ENCODE measurements at regions of chr2 and their contacts with region 1.

Region 1: DNA sequence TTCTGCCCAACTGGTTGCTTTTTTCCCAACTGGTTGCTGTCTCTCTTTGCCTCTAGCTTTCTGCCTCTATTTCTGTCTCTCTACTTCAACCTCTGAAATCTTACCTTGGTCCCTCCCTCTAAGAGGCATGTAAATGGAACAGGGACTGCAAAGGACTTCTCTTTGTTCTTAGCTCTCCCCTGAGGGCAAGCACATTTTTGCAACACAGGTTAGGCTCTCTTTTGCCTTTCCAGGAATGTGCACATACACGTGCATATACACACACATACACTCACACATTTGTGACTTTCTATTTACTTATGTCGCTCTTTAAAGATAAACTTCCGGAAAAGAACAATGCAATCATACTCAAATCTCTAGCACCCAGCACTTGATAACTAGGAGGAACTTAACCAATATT is 262.6 kb upstream of the DDX18 start:
- DNase-seq: no peak
- ATAC-seq: no peak
- H3K4me3 ChIP-seq: no peak overlapping the region
- H3K27ac ChIP-seq: no peak overlapping the region
- H3K4me1 ChIP-seq: no peaks in the 10 kb centered on the region
- H3K27me3 ChIP-seq: no peaks in the 10 kb centered on the region
- CTCF ChIP-seq: no peak
- POLR2A ChIP-seq: no peak
- RAD21 ChIP-seq: no peak

Region 2: GRCh38 chr2:116133381-116133942 is 1418.4 kb before region 1 on chr2:
- CTCF ChIA-PET with region 1: no interaction called
- POLR2A ChIA-PET with region 1: no interaction called
- RAD21 ChIA-PET with region 1: no interaction called
- intact Hi-C with region 1: loop called (anchors 5 kb)
- DNase-seq: no peak
- ATAC-seq: no peak
- H3K4me3 ChIP-seq: no peak overlapping the region
- H3K27ac ChIP-seq: no peak overlapping the region
- H3K4me1 ChIP-seq: no peaks in the 10 kb centered on the region
- H3K27me3 ChIP-seq: no peaks in the 10 kb centered on the region
- CTCF ChIP-seq: no peak
- POLR2A ChIP-seq: no peak
- RAD21 ChIP-seq: no peak

Region 3: DNA sequence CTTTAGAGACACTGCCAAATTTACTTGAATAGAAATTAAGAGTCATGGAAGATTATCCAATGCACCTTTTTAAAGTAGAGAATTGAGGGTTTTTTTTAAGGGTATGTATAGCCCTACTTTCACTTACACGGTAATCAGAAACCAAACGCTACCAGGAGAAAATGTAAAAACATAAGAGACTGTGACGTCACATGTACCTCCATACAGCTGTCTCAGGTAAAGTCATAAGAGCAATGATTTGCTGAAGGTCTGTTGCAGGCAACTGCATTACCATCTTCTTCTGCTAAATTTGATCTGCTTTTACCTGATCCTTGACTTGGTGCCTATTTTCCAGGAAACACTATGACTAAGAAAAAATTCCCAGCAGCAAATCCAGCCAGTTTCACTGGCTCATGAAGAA is 215.9 kb before region 1 on chr2:
- CTCF ChIA-PET with region 1: no interaction called
- POLR2A ChIA-PET with region 1: no interaction called
- RAD21 ChIA-PET with region 1: no interaction called
- intact Hi-C with region 1: no loop called
- DNase-seq: no peak
- ATAC-seq: no peak
- H3K4me3 ChIP-seq: no peak overlapping the region
- H3K27ac ChIP-seq: no peak overlapping the region
- H3K4me1 ChIP-seq: no peaks in the 10 kb centered on the region
- H3K27me3 ChIP-seq: no peaks in the 10 kb centered on the region
- CTCF ChIP-seq: no peak
- POLR2A ChIP-seq: no peak
- RAD21 ChIP-seq: no peak

Region 4: GRCh38 chr2:117631152-117631945 is 79.5 kb after region 1 on chr2:
- CTCF ChIA-PET with region 1: no interaction called
- POLR2A ChIA-PET with region 1: no interaction called
- RAD21 ChIA-PET with region 1: no interaction called
- intact Hi-C with region 1: no loop called
- DNase-seq: no peak
- ATAC-seq: no peak
- H3K4me3 ChIP-seq: no peak overlapping the region
- H3K27ac ChIP-seq: no peak overlapping the region
- H3K4me1 ChIP-seq: no peaks in the 10 kb centered on the region
- H3K27me3 ChIP-seq: no peaks in the 10 kb centered on the region
- CTCF ChIP-seq: no peak
- POLR2A ChIP-seq: no peak
- RAD21 ChIP-seq: no peak

Region 5: DNA sequence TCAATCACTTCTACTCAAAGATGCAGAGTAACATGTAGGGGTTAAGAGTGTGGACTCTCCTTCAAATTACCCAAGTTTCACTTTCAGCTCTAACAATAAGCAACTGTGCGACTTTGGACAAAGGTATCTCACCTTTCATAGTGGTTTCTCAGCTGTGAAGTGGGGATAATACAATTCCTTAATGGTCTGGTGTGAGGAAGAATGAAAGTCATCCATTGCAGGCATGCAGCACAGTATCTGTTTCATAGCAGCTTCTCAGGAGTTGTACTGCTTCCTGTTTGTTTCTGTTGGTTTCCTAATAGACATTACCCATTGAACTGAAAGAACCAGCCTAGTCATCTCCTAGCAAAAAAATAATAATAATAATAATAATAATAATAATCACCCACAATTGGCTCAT is 337.0 kb after region 1 on chr2:
- CTCF ChIA-PET with region 1: no interaction called
- POLR2A ChIA-PET with region 1: no interaction called
- RAD21 ChIA-PET with region 1: no interaction called
- intact Hi-C with region 1: no loop called
- DNase-seq: no peak
- ATAC-seq: no peak
- H3K4me3 ChIP-seq: no peak overlapping the region
- H3K27ac ChIP-seq: no peak overlapping the region
- H3K4me1 ChIP-seq: no peaks in the 10 kb centered on the region
- H3K27me3 ChIP-seq: no peaks in the 10 kb centered on the region; the same call in none of the 2 replicates
- CTCF ChIP-seq: no peak
- POLR2A ChIP-seq: no peak
- RAD21 ChIP-seq: no peak